ENCODE measurements at regions of chr15 and their contacts with region 1.

Region 1: DNA sequence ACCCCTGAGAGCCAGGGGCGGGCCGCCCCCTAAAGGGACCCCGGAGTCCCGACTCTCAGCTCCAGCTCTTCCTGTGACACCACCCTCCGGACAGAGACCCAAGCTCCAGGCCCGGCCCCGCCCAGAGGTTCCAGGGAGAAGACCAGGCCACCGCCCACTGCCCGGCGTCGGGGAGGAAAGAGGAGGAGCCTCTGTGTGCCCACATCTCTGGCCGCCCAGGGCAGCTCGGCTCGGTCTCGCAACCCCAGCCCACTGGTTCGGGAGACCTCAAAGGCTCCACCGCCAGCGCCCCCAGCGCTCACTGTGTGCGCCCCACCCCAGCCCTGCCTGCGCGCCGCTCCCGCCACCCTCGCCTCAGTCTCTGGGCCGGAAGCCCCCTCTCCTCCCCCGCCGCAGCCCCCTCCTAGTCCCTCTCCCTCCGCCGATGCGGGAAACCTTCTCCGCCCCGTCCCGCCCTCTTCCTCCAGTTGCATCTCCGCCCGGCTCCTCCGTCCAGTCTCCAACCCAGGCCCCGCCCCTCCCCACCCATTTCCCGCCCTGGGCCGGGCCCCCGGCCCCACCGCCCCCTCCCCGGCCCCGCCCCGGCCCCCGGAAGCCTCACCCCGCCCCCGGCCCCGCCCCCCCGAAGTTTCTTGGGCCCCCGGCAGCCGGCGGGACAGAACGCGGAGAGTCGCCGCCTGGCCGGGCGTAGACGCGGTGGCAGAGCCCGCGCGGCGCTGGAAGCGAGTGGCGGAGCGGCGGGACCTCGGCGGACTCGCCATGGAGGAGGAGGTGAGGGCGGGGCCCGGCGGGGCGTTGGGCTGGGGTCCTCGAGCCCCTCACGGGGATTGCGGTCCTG is at the start of gene PLEKHO2:
- DNase-seq: peak; percentile 93 to 100 (median 98)
- ATAC-seq: peak; percentile 90
- H3K4me3 ChIP-seq: peak within 1 kb of the TSS; percentile 94 to 95
- H3K27ac ChIP-seq: peak within 1 kb of the TSS; percentile 94 to 98
- H3K4me1 ChIP-seq: peaks cover 8 to 69% of the 10 kb centered on the region in 2 donors
- H3K27me3 ChIP-seq: no peaks in the 10 kb centered on the region
- CTCF ChIP-seq: peak; percentile 11 to 46
- polyA plus RNA-seq, gene PLEKHO2: 22.0 to 29.1 (median 25.3) TPM

Region 2: DNA sequence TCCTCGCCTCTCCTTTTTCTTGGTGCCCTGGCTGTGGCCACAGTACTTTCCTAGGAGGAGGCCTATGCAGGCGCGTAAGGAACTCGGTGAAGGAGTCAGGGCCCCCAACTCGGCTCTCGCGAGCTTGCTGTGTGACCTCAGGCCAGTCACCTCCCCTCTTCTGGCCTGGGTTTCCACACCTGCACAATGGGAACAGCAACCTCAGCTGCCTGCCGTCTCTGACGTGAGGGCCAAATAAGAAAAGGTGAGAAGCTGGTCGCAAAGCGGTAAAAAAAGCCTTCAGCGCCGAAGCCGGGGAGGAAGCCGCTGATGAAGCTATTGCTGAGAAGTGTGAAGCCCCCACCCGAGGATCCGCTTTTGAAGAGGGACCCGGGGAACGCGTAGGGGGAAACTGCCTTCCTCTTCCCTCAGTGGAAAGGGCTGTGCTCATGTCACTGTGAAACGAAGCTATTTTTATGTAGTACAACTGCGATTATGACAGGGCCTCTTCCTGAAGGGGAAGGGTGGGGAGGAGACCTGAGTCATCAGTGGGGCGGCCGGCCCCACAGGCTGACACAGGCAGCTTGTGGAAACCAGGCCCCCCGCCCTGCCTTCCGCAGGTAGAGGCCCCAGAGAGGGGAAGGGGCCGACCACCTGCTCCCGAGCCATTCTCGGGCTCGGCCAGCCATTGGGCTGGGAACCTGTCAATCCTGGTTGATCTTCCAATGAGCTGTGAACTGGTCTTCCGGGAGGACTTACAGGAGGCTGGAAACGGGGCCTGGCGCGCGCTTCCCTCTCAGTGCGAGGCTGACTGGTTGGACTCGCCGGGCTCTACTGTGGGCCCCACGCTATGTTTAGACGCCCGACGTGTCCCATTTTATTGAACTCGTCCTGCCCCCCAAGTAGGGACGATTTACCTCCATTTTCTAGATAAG is 52.3 kb after region 1 on chr15:
- intact Hi-C with region 1: loop called in 1 of 2 experiments (anchors 10 kb)
- DNase-seq: peak; percentile 92 to 96 (median 94)
- ATAC-seq: peak; percentile 89
- H3K4me3 ChIP-seq: peak overlapping the region in 1 of 2 donors; percentile 29
- H3K27ac ChIP-seq: peak overlapping the region; percentile 88 to 99
- H3K4me1 ChIP-seq: peaks cover 36 to 79% of the 10 kb centered on the region in 2 donors
- H3K27me3 ChIP-seq: no peaks in the 10 kb centered on the region
- CTCF ChIP-seq: no peak

Region 3: GRCh38 chr15:65020419-65020818 is 178.9 kb after region 1 on chr15:
- intact Hi-C with region 1: no loop called
- DNase-seq: no peak
- ATAC-seq: no peak
- H3K4me3 ChIP-seq: no peak overlapping the region
- H3K27ac ChIP-seq: no peak overlapping the region
- H3K4me1 ChIP-seq: no peaks in the 10 kb centered on the region
- H3K27me3 ChIP-seq: no peaks in the 10 kb centered on the region
- CTCF ChIP-seq: no peak

Measured in left lung (tissue), 14 donors.